ENCODE measurements at regions of chr11 and their contacts with region 1.

Region 1: DNA sequence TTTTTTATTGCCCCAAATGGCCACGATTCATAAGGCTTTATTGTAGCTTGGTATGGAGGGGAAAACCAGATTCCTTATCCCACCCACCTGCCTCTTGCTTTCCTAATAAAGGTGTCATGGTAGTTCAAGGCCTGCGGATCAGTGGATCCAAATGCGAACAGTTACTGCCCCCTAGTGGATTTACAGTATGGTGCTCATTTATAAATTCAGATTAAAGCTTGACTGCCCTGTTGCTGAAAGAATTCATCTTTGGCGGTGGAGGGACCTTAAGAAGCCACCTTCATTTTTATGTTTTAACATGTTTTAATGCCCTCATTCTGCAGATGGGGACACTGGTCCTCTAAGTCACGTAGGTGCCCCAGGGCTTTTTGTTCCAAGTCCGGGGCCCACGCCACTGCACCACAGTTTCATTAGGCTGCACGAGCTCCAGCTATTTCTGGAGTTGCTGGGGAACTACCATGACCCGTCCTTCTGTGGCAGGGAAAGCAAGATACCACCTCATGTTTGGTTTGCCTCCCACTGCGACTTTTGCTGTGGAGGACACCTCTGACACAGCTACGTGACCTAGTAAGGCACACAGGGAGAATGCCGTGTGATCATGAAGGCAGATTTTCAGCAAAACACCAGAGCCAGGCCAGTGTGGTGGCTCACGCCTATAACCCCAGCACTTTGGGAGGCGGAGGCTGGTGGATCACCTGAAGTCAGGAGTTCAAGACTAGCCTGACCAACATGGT is 15.6 kb upstream of the INCENP start:
- DNase-seq: peak; percentile 59
- H3K4me3 ChIP-seq: no peak overlapping the region
- H3K27ac ChIP-seq: no peak overlapping the region
- H3K4me1 ChIP-seq: peaks cover 12% of the 10 kb centered on the region
- H3K27me3 ChIP-seq: no peaks in the 10 kb centered on the region
- CTCF ChIP-seq: peak; percentile 84 to 91 (median 85)
- POLR2A ChIP-seq: no peak

Region 2: DNA sequence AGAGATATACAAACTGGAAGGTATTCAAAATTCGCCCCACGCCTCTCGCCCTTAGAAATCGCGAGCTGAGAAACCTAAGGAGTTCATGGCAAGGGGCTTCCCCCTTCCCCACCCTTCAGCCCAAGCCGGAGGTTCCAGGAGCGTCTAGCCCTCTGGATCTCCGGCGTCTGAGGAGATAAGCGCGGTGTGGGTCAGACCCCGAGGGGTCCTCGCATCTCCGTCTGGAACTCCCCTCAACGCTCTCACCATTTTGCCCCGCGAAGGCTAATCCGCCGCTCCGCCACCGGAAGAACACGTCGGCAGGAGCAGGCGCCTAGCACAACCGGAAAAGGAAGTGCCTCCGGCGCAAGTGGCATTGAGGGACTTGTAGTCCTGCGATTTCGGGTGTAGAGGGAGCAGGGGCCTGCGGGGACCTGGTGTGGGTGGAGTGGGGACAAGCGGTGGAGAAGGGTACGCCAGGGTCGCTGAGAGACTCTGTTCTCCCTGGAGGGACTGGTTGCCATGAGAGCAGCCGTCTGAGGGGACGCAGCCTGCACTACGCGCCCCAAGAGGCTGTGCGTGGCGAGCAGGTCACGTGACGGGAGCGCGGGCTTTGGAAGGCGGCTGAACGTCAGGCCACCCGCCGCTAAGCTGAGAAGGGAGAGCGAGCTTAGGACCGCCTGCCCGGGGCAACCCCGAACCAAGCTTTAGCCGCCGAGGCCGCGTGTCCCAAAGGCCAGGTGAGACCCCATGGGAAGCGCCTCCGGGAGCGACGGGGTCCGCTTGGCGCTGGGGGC is 315.7 kb before region 1 on chr11 and contains the starts of genes FEN1 and TMEM258:
- intact Hi-C with region 1: loop called (anchors 10 kb)
- DNase-seq: peak; percentile 93
- H3K4me3 ChIP-seq: peak within 1 kb of the TSS; percentile 84 to 97
- H3K27ac ChIP-seq: peak within 1 kb of the TSS; percentile 95 to 98
- H3K4me1 ChIP-seq: peaks cover 17% of the 10 kb centered on the region
- H3K27me3 ChIP-seq: no peaks in the 10 kb centered on the region
- CTCF ChIP-seq: peak in 1 of 3 experiments; percentile 27
- POLR2A ChIP-seq: no peak
- total RNA-seq, gene FEN1: 22.7 to 31.5 TPM
- total RNA-seq, gene TMEM258: 46.7 to 55.6 TPM

Region 3: GRCh38 chr11:61891331-61892084 is 216.7 kb before region 1 on chr11 and contains the start of gene FADS3:
- intact Hi-C with region 1: loop called (anchors 5 kb)
- DNase-seq: peak; percentile 88
- H3K4me3 ChIP-seq: peak within 1 kb of the TSS; percentile 79 to 85
- H3K27ac ChIP-seq: peak within 1 kb of the TSS; percentile 65 to 80
- H3K4me1 ChIP-seq: peaks cover 13% of the 10 kb centered on the region
- H3K27me3 ChIP-seq: no peaks in the 10 kb centered on the region
- CTCF ChIP-seq: no peak
- POLR2A ChIP-seq: no peak
- total RNA-seq, gene FADS3: 50.6 to 88.5 TPM